Naive thymus-derived CD4-positive, alpha-beta T cell (primary cell): ENCODE measurements at regions of chr7 and their contacts with region 1.

Region 1: DNA sequence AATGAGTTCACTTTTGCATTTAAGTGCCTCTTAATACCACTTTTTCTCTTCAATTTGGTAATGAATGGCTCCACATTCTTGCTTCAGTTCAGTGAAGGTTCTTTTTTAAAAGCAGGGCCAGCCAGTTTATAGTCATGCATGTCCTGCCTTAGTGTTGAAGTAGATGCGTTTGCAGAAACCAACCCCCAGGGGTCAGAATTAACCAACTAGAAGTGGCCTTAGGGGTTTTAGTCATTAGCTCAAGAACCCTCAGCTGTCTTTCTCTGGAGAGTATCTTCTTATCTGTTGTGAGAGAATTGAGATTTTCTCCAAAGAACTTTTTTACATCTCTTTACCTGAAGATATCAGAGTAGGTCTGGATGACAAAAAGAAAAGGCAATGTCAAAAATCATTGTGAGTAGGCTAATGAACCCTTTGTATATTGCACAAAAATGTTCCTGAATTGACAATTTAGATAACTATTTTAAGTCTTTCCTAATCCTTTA is 82.2 kb downstream of the PIK3CG start:
- DNase-seq: peak in 7 of 9 donors; percentile 9 to 45 (median 31)
- ATAC-seq: peak; percentile 69
- H3K4me3 ChIP-seq: no peak overlapping the region
- H3K4me3 Mint-ChIP-seq: no peak overlapping the region
- H3K27ac ChIP-seq: no peak overlapping the region
- H3K27ac Mint-ChIP-seq: no peak overlapping the region
- H3K4me1 ChIP-seq: no peaks in the 10 kb centered on the region
- H3K4me1 Mint-ChIP-seq: peaks cover 0 to 4% (median 0%) of the 10 kb centered on the region in 7 donors
- H3K27me3 ChIP-seq: no peaks in the 10 kb centered on the region
- H3K27me3 Mint-ChIP-seq: peaks cover 0 to 13% (median 4%) of the 10 kb centered on the region in 5 donors

Region 2: GRCh38 chr7:106793015-106793975 is 154.0 kb before region 1 on chr7:
- CTCF ChIA-PET with region 1: no interaction called
- POLR2A ChIA-PET with region 1: interaction called, 4 read pairs
- intact Hi-C with region 1: loop called in 1 of 2 experiments (anchors 1 kb)
- DNase-seq: peak in 6 of 9 donors; percentile 31 to 59 (median 51)
- ATAC-seq: peak; percentile 76
- H3K4me3 ChIP-seq: no peak overlapping the region
- H3K4me3 Mint-ChIP-seq: no peak overlapping the region
- H3K27ac ChIP-seq: no peak overlapping the region
- H3K27ac Mint-ChIP-seq: no peak overlapping the region
- H3K4me1 ChIP-seq: no peaks in the 10 kb centered on the region
- H3K4me1 Mint-ChIP-seq: peaks cover 0 to 4% (median 0%) of the 10 kb centered on the region in 7 donors
- H3K27me3 ChIP-seq: no peaks in the 10 kb centered on the region
- H3K27me3 Mint-ChIP-seq: no peaks in the 10 kb centered on the region

Region 3: DNA sequence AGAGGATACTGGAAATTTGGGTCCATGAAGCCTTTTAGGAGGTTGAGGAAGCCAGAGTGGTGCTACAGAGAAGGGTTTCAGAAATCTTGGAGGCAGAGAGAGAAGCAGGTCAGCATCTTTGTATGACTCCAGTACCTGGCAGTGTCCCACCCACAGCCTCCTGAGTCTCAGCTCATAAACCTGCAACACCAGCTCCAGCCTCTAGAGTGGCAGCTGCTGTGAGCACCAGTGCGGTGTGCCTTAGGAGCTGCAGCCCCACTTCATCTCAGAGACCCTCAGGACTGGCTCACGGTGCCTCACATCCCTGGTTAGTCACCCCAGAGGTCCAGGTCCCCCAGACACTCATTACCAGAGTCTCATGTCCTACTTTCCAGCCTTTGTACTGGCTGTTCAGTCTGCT is 12.5 kb after region 1 on chr7:
- CTCF ChIA-PET with region 1: no interaction called
- POLR2A ChIA-PET with region 1: no interaction called
- intact Hi-C with region 1: no loop called
- DNase-seq: no peak
- ATAC-seq: no peak
- H3K4me3 ChIP-seq: no peak overlapping the region
- H3K4me3 Mint-ChIP-seq: no peak overlapping the region
- H3K27ac ChIP-seq: no peak overlapping the region
- H3K27ac Mint-ChIP-seq: no peak overlapping the region
- H3K4me1 ChIP-seq: no peaks in the 10 kb centered on the region
- H3K4me1 Mint-ChIP-seq: no peaks in the 10 kb centered on the region
- H3K27me3 ChIP-seq: no peaks in the 10 kb centered on the region
- H3K27me3 Mint-ChIP-seq: peaks cover 0 to 7% (median 0%) of the 10 kb centered on the region in 5 donors

Region 4: DNA sequence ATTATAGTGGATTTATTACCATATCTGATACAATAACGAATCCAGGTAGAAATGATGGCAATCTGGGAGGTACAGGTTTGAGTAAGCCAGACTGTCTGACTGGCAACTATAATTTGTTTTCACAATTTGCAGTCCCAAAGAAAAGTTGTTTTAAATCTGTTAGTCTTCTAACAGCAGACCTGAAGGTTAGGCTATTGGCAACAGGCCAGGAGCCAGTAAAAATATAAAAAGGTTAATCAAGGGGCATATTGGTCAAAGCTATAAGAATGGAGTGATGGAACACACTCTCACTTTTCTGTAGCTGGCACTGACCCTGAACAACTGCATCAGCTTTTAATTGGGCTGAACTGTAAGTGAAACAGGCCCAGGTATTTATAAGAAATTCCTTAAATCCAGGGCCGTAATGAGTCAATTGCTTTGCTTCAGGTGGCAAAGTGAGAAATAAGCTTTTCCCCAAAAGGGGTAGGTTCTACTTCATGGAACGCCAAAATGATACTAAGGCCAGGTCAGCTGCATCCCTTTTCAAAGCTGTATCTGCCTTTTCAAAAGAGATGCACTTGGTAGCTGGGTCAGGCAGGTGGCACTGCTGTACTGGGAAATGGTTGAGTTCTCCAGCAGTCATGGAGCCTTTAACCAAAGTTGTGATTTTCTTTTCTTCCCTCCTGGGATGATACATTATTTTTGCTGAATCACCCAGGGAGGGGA is 515.6 kb after region 1 on chr7:
- CTCF ChIA-PET with region 1: no interaction called
- POLR2A ChIA-PET with region 1: no interaction called
- intact Hi-C with region 1: loop called in 1 of 2 experiments (anchors 1 kb)
- DNase-seq: peak; percentile 10 to 47 (median 36)
- ATAC-seq: peak; percentile 82
- H3K4me3 ChIP-seq: no peak overlapping the region
- H3K4me3 Mint-ChIP-seq: no peak overlapping the region
- H3K27ac ChIP-seq: no peak overlapping the region
- H3K27ac Mint-ChIP-seq: peak overlapping the region in 1 of 9 donors; percentile 19
- H3K4me1 ChIP-seq: no peaks in the 10 kb centered on the region
- H3K4me1 Mint-ChIP-seq: peaks cover 0 to 6% (median 0%) of the 10 kb centered on the region in 7 donors
- H3K27me3 ChIP-seq: no peaks in the 10 kb centered on the region
- H3K27me3 Mint-ChIP-seq: no peaks in the 10 kb centered on the region